ENCODE measurements at regions of chr1 and their contacts with region 1.

Region 1: GRCh38 chr1:231998791-231999190 is 372.2 kb downstream of the DISC1 start:
- DNase-seq: no peak
- H3K4me3 ChIP-seq: no peak overlapping the region
- H3K27ac ChIP-seq: no peak overlapping the region
- H3K4me1 ChIP-seq: no peaks in the 10 kb centered on the region
- H3K27me3 ChIP-seq: no peaks in the 10 kb centered on the region
- CTCF ChIP-seq: no peak

Region 2: GRCh38 chr1:231951374-231951773 is 47.4 kb before region 1 on chr1:
- intact Hi-C with region 1: loop called (anchors 1 kb)
- DNase-seq: no peak
- H3K4me3 ChIP-seq: no peak overlapping the region
- H3K27ac ChIP-seq: no peak overlapping the region
- H3K4me1 ChIP-seq: no peaks in the 10 kb centered on the region
- H3K27me3 ChIP-seq: no peaks in the 10 kb centered on the region
- CTCF ChIP-seq: no peak

Measured in tibial artery (tissue), 4 donors.